ENCODE measurements at regions of chr10 and their contacts with region 1.

Region 1: DNA sequence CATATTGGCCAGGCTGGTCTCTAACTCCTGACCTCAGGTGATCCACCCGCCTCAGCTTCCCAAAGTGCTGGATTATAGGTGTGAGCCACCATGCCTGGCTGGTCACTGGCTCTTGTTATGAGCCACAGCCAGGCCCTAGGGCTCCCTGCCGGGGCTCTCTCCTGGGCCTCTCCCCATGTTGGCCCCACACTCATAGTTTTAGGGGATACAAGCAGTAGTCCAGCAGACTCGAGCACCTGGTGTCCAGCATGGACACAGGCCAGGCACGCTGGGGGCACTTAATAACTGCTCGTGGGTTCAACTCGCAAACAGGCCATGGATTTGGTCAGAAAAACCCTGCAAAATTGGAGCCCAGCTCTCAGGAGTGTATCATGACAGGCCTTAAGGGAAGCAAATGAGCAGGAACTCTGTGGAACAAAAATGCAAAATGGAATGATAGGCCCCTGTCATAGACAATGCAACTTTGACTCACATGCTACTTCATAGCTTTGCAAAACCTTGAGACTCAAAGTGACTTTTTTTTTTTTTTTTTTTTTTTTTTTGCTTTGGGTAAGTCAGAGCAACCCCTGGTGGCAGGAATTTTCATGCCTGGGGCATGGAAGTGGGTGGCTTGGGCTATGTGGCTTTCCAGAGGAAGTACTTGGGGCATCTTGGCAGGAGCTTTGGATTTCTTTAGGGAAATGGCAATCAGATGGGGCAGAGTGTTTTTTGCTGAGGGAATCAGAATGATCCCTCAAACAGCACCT is 62.5 kb downstream of the TACC2 start:
- DNase-seq: peak; percentile 79
- ATAC-seq: peak; percentile 73
- H3K4me3 ChIP-seq: no peak overlapping the region
- H3K27ac ChIP-seq: no peak overlapping the region; the same call in 1 of the 2 replicates
- H3K4me1 ChIP-seq: peaks cover 9 to 13% of the 10 kb centered on the region in 2 experiments
- H3K27me3 ChIP-seq: no peaks in the 10 kb centered on the region
- CTCF ChIP-seq: peak; percentile 74 to 98 (median 96)
- POLR2A ChIP-seq: no peak
- RAD21 ChIP-seq: peak; percentile 76

Region 2: DNA sequence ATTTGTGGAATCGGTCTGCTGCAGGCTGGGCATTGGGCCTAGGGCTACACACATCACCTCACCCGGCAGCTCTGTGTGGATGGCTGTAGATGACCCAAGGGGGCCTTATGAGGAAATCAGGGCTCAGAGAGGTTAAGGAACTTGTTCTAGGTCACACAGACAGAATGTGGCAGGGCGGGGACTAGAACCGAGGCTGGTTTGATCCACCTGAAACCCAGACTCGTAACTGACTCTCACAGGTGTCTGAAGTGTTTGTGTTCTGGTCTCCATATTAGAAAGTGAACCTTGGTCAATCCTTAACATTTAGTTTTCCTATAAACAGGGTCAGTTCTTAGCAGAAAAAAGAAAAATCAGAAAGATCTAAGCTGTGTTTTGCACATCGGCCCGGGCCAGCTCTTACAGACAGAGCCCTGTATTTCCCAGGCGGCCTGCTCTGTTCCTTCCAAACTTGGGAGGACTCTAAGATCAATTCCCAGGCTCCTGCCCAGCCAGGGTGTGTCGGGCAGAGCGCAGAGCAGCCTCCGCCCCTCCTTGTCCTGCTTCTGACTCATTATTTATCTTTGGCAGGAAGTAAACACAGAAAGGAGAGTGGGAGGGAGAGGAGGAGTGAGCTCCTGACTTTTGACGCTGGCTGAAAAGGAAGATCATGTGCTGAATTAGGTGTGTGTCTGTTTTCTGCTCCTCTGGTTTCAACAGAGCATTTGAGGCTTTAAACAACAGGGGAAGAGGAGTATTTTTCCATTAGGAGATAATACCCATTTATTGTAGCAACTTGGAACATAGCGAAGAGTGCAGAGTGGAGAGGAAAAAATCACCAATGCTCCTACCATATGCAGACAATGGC is 11.6 kb after region 1 on chr10:
- CTCF ChIA-PET with region 1: interaction called, 27 read pairs
- POLR2A ChIA-PET with region 1: interaction called, 5 read pairs
- RAD21 ChIA-PET with region 1: no interaction called
- intact Hi-C with region 1: no loop called
- DNase-seq: peak; percentile 91
- ATAC-seq: peak; percentile 98
- H3K4me3 ChIP-seq: peak overlapping the region; percentile 0 to 28; a peak in 2 of 4 replicates
- H3K27ac ChIP-seq: peak overlapping the region; percentile 74
- H3K4me1 ChIP-seq: peaks cover 31 to 35% of the 10 kb centered on the region in 2 experiments
- H3K27me3 ChIP-seq: no peaks in the 10 kb centered on the region
- CTCF ChIP-seq: no peak
- POLR2A ChIP-seq: no peak
- RAD21 ChIP-seq: peak; percentile 42

Region 3: GRCh38 chr10:122142641-122143237 is 91.3 kb after region 1 on chr10:
- CTCF ChIA-PET with region 1: interaction called, 15 read pairs
- POLR2A ChIA-PET with region 1: no interaction called
- RAD21 ChIA-PET with region 1: no interaction called
- intact Hi-C with region 1: loop called (anchors 1 kb)
- DNase-seq: no peak
- ATAC-seq: peak; percentile 52
- H3K4me3 ChIP-seq: no peak overlapping the region
- H3K27ac ChIP-seq: no peak overlapping the region; the same call in 1 of the 2 replicates
- H3K4me1 ChIP-seq: peaks cover 31 to 45% of the 10 kb centered on the region in 2 experiments
- H3K27me3 ChIP-seq: no peaks in the 10 kb centered on the region
- CTCF ChIP-seq: peak; percentile 70 to 100 (median 99)
- POLR2A ChIP-seq: no peak
- RAD21 ChIP-seq: peak; percentile 92

Measured in HCT116 (cell line).